Caco-2 (cell line): ENCODE measurements at regions of chr7 and their contacts with region 1.

Region 1: DNA sequence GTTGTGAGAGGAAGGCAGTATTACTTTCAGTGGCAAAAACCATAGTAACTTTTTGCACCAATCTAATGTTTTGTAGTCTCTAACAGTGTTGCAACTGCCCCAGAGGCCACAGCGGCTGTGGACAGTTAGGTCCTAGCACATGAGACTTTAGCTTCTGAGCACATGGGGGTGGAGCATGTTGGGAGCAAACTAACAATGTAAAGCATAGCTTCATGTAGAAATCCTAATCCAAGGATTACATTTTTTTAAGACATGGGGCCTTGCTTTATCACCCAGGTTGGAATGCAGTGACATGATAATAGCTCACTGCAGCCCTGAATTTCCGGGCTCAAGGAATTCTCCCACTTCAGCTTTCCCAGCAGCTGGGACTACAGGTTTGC is 49.0 kb downstream of the LAMB1 start:
- DNase-seq: peak; percentile 66 to 72
- H3K4me3 ChIP-seq: no peak overlapping the region
- H3K4me3 Mint-ChIP-seq: peak overlapping the region; percentile 61
- H3K27ac Mint-ChIP-seq: peak overlapping the region; percentile 85
- H3K4me1 ChIP-seq: peaks cover 70% of the 10 kb centered on the region
- H3K4me1 Mint-ChIP-seq: peaks cover 49% of the 10 kb centered on the region
- H3K27me3 ChIP-seq: no peaks in the 10 kb centered on the region
- H3K27me3 Mint-ChIP-seq: no peaks in the 10 kb centered on the region
- CTCF ChIP-seq: no peak

Region 2: DNA sequence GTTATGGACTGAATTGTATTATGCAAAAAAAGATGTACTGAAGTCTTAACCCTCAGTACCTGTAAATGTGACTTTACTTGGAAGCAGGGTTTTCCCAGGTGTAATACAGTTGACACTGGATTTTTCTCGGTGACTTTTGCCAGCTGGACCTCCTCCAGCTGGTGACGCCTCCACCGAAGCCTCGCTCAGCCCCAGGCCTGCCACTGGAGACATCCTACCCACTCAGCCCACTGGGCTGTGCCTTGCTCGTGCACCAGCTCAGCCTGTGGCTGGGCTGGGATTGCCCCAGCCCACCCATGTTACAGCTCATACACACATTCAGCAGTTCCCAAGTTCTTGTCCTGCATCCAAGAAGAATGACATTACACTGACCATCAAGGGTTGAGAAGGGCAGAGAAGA is 526.5 kb before region 1 on chr7:
- CTCF ChIA-PET with region 1: no interaction called
- POLR2A ChIA-PET with region 1: no interaction called
- intact Hi-C with region 1: no loop called
- DNase-seq: no peak
- H3K4me3 ChIP-seq: no peak overlapping the region
- H3K4me3 Mint-ChIP-seq: no peak overlapping the region
- H3K27ac Mint-ChIP-seq: no peak overlapping the region
- H3K4me1 ChIP-seq: no peaks in the 10 kb centered on the region
- H3K4me1 Mint-ChIP-seq: no peaks in the 10 kb centered on the region
- H3K27me3 ChIP-seq: no peaks in the 10 kb centered on the region
- H3K27me3 Mint-ChIP-seq: no peaks in the 10 kb centered on the region
- CTCF ChIP-seq: no peak

Region 3: GRCh38 chr7:107940951-107941350 is 13.0 kb before region 1 on chr7:
- CTCF ChIA-PET with region 1: no interaction called
- POLR2A ChIA-PET with region 1: interaction called, 13 read pairs
- intact Hi-C with region 1: no loop called
- DNase-seq: no peak
- H3K4me3 ChIP-seq: no peak overlapping the region
- H3K4me3 Mint-ChIP-seq: no peak overlapping the region
- H3K27ac Mint-ChIP-seq: peak overlapping the region; percentile 63
- H3K4me1 ChIP-seq: no peaks in the 10 kb centered on the region
- H3K4me1 Mint-ChIP-seq: peaks cover 18% of the 10 kb centered on the region
- H3K27me3 ChIP-seq: no peaks in the 10 kb centered on the region
- H3K27me3 Mint-ChIP-seq: no peaks in the 10 kb centered on the region
- CTCF ChIP-seq: no peak

Region 4: GRCh38 chr7:107966711-107967110 is 12.8 kb after region 1 on chr7:
- CTCF ChIA-PET with region 1: interaction called, 3 read pairs
- POLR2A ChIA-PET with region 1: no interaction called
- intact Hi-C with region 1: loop called (anchors 1 kb)
- DNase-seq: peak; percentile 55 to 61
- H3K4me3 ChIP-seq: no peak overlapping the region
- H3K4me3 Mint-ChIP-seq: no peak overlapping the region
- H3K27ac Mint-ChIP-seq: no peak overlapping the region
- H3K4me1 ChIP-seq: peaks cover 43% of the 10 kb centered on the region
- H3K4me1 Mint-ChIP-seq: no peaks in the 10 kb centered on the region
- H3K27me3 ChIP-seq: no peaks in the 10 kb centered on the region
- H3K27me3 Mint-ChIP-seq: no peaks in the 10 kb centered on the region
- CTCF ChIP-seq: peak in 1 of 2 experiments; percentile 1

Region 5: DNA sequence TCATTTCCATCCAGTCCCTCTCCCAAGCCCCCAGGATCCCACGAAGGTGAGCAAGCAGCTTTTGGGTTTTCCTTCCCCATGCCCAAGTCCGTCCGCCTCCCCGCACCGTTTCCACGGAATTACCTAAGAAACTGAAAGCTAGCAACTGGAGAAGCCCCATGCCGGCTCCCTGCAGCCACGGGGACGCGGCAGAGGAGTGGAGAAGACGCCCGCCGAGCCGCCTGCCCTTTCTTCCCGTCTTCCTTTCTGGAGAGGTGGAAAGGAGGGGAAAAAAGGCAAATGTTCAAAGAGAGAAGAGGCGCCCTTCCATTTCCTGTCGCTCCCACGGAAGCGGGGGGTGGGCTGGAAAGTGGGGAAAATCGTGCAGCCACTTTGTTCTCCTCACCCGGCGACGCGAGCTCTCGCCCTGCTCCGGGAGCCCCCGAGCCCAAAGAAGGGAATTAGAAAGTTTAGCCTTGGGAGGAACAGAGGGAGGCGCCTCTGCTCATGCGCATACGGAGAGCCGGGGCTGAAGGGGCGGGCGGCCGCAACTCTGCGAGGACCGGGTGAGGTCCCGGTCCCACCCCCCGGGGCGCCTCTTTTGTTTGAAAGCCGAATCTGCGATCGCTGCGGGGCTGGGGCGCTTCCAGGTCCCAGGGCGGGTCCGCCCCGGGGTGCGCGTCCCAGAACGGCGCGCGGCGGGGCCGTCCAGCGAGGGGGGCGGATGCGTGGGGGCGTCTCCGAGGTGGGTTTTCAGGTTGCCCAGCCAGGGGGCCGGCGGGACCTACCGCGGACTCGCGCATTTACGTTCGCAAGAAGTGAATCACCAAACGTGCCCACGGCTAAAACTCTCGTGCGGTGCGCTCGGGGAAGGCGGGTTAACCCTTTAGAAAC is 49.0 kb after region 1 on chr7 and contains the start of gene LAMB1:
- CTCF ChIA-PET with region 1: no interaction called
- POLR2A ChIA-PET with region 1: interaction called, 6 read pairs
- intact Hi-C with region 1: loop called (anchors 5 kb)
- DNase-seq: peak; percentile 93 to 94
- H3K4me3 ChIP-seq: peak within 1 kb of the TSS; percentile 94
- H3K4me3 Mint-ChIP-seq: peak within 1 kb of the TSS; percentile 79
- H3K27ac Mint-ChIP-seq: peak within 1 kb of the TSS; percentile 83
- H3K4me1 ChIP-seq: peaks cover 70% of the 10 kb centered on the region
- H3K4me1 Mint-ChIP-seq: peaks cover 38% of the 10 kb centered on the region
- H3K27me3 ChIP-seq: no peaks in the 10 kb centered on the region
- H3K27me3 Mint-ChIP-seq: no peaks in the 10 kb centered on the region
- CTCF ChIP-seq: no peak
- total RNA-seq, gene LAMB1: 418 and 431 TPM in 2 replicates

Region 6: DNA sequence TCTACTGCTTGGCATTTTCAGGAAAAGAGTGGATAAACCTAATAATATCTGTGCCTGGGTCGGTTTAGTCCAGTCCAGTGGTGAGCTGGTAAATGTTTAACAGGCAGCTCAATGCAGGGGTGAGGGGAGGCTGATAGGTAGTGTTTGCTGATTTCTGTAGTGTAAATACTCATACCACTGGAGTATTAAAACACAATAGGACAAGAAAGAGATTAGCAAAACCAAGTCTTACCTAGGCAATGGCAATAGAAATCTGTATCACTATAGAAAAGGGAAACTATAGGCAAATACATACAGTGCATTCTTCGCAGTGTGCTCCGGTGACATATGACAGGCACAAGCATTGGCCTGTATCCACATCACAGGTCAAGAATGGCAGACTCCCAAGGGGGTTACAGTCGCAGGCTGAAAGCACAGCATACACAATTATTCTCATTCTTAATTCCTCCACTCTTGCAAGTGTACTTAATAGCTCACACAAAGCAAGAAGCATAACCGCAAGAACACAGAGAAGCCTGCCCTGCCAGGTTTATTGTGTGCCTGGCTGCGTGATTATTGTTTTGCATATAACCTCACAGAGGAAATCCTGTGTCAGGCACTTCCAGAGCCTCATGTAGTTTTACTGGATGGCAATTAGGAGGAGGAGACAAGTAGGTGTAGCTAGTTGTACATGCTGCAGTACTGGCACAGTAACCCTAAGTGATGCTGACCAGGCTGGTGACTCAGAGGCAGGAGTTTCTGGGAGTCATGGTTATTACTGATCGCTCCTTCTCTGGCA is 141.2 kb after region 1 on chr7:
- CTCF ChIA-PET with region 1: no interaction called
- POLR2A ChIA-PET with region 1: interaction called, 11 read pairs
- intact Hi-C with region 1: no loop called
- DNase-seq: peak; percentile 86 to 89
- H3K4me3 ChIP-seq: no peak overlapping the region
- H3K4me3 Mint-ChIP-seq: peak overlapping the region; percentile 62
- H3K27ac Mint-ChIP-seq: peak overlapping the region; percentile 63
- H3K4me1 ChIP-seq: peaks cover 76% of the 10 kb centered on the region
- H3K4me1 Mint-ChIP-seq: peaks cover 54% of the 10 kb centered on the region
- H3K27me3 ChIP-seq: no peaks in the 10 kb centered on the region
- H3K27me3 Mint-ChIP-seq: no peaks in the 10 kb centered on the region
- CTCF ChIP-seq: no peak

Region 7: DNA sequence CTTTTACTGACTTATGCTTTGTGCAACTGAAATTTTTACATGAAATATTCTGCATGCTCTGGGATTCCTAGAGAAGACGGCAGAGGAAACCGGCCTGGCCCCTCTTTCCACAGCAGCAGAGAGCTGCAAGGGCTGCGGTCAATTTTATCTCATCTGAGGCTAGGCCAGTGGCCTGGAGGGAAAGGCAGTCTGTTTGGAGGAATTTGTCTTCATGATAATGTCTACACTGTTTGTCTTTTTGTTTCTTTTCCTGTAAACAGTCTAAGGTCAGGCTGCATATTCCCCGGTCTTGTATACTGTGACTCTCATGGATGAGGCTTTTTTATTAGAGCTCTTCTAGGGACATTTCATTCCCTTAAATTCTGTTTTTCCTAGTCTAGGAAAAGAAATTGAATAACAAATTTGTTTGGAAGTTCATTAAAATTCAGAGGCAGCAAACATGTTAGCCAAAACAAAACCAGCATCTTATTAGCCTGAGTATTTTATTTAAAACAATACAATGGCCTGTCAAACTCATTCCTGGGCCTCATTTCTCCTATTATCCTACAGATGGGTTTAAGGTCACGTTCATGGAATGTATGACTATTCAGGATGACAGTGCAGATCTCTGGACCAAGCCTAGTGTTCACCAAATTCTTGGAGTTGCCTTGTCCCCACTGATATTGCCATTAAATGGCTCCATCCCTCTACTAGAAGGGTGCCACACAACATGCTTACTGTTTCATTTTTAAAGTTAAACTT is 149.8 kb after region 1 on chr7:
- CTCF ChIA-PET with region 1: no interaction called
- POLR2A ChIA-PET with region 1: no interaction called
- intact Hi-C with region 1: loop called (anchors 2 kb)
- DNase-seq: no peak
- H3K4me3 ChIP-seq: no peak overlapping the region
- H3K4me3 Mint-ChIP-seq: peak overlapping the region; percentile 60
- H3K27ac Mint-ChIP-seq: peak overlapping the region; percentile 9
- H3K4me1 ChIP-seq: peaks cover 49% of the 10 kb centered on the region
- H3K4me1 Mint-ChIP-seq: peaks cover 43% of the 10 kb centered on the region
- H3K27me3 ChIP-seq: no peaks in the 10 kb centered on the region
- H3K27me3 Mint-ChIP-seq: no peaks in the 10 kb centered on the region
- CTCF ChIP-seq: no peak

Region 8: GRCh38 chr7:108146070-108146837 is 192.3 kb after region 1 on chr7:
- CTCF ChIA-PET with region 1: interaction called, 3 read pairs
- POLR2A ChIA-PET with region 1: no interaction called
- intact Hi-C with region 1: loop called (anchors 5 kb)
- DNase-seq: peak; percentile 81 to 82
- H3K4me3 ChIP-seq: no peak overlapping the region
- H3K4me3 Mint-ChIP-seq: no peak overlapping the region
- H3K27ac Mint-ChIP-seq: no peak overlapping the region
- H3K4me1 ChIP-seq: peaks cover 16% of the 10 kb centered on the region
- H3K4me1 Mint-ChIP-seq: peaks cover 15% of the 10 kb centered on the region
- H3K27me3 ChIP-seq: no peaks in the 10 kb centered on the region
- H3K27me3 Mint-ChIP-seq: no peaks in the 10 kb centered on the region
- CTCF ChIP-seq: peak; percentile 93 to 97